ENCODE measurements at regions of chr14 and their contacts with region 1.

Region 1: GRCh38 chr14:67583711-67584644 is 16.1 kb downstream of the PIGH start:
- DNase-seq: peak; percentile 77
- CTCF ChIP-seq: peak; percentile 85

Region 2: GRCh38 chr14:67526676-67527459 is 57.1 kb before region 1 on chr14:
- CTCF ChIA-PET with region 1: interaction called, 11 read pairs
- POLR2A ChIA-PET with region 1: no interaction called
- DNase-seq: peak; percentile 53
- CTCF ChIP-seq: peak; percentile 53

Region 3: GRCh38 chr14:67547282-67547681 is 36.7 kb before region 1 on chr14:
- CTCF ChIA-PET with region 1: no interaction called
- POLR2A ChIA-PET with region 1: no interaction called
- DNase-seq: no peak
- CTCF ChIP-seq: no peak

Region 4: GRCh38 chr14:67599698-67600561 is 16.0 kb after region 1 on chr14 and contains the start of gene PIGH:
- CTCF ChIA-PET with region 1: interaction called, 46 read pairs
- POLR2A ChIA-PET with region 1: no interaction called
- DNase-seq: peak; percentile 95
- CTCF ChIP-seq: peak; percentile 54

Region 5: GRCh38 chr14:67619446-67620216 is 35.7 kb after region 1 on chr14 and contains the start of gene ARG2:
- CTCF ChIA-PET with region 1: interaction called, 21 read pairs
- POLR2A ChIA-PET with region 1: no interaction called
- DNase-seq: peak; percentile 97
- CTCF ChIP-seq: peak; percentile 7

Region 6: GRCh38 chr14:67674481-67675169 is 90.6 kb after region 1 on chr14 and contains the start of gene VTI1B:
- CTCF ChIA-PET with region 1: interaction called, 203 read pairs
- POLR2A ChIA-PET with region 1: interaction called, 4 read pairs
- DNase-seq: peak; percentile 90
- CTCF ChIP-seq: peak; percentile 28

Region 7: GRCh38 chr14:67710209-67710608 is 126.2 kb after region 1 on chr14:
- CTCF ChIA-PET with region 1: interaction called, 313 read pairs
- POLR2A ChIA-PET with region 1: no interaction called
- DNase-seq: no peak
- CTCF ChIP-seq: no peak

Measured in GM10248 (cell line).